PC-3 (cell line): ENCODE measurements at regions of chrX and their contacts with region 1.

Region 1: DNA sequence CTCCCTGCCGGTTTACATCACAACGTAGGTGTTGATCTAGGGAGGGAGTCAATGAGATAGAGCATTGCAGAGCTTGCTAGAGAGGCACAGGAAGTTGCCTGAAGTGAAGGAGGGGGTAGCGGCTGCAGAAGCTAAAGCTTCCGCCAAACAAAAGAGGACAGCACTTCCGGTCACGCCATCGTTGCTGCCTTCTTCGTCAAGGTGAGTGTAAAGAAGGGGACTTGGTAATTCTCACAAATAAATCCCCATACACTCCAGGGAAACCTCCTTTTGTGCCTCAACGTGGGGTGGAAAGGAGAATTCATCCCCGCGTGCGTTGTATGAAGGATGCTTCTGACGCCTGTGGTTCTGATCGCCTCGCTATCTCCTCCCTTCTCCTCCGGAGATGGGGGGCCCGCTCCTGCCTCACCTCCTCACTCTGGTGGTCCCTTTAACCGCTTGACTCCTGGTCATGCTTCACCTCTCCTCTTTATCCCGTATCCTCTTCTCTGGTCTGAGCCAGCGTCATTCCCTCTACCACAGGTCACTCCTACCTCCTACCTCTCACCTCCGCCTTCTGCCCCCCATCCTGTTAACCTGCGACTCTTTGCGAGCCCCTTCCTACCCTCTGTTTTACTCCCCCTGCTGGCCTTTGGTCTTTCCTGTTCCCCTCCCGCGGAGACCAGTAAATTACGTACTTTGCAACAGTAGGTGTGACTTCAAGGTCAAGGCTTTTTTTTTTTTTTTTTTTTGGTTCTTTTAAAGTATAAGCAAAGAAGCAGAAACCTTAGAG is 59.9 kb downstream of the GSPT2 start:
- DNase-seq: peak; percentile 62
- ATAC-seq: peak; percentile 97
- H3K4me3 ChIP-seq: peak overlapping the region; percentile 94
- H3K27ac ChIP-seq: peak overlapping the region; percentile 38; the same call in 1 of the 2 replicates
- H3K4me1 ChIP-seq: peaks cover 7% of the 10 kb centered on the region; the same call in 1 of the 2 replicates
- H3K27me3 ChIP-seq: no peaks in the 10 kb centered on the region
- CTCF ChIP-seq: peak; percentile 37; the same call in 1 of the 2 replicates

Region 2: DNA sequence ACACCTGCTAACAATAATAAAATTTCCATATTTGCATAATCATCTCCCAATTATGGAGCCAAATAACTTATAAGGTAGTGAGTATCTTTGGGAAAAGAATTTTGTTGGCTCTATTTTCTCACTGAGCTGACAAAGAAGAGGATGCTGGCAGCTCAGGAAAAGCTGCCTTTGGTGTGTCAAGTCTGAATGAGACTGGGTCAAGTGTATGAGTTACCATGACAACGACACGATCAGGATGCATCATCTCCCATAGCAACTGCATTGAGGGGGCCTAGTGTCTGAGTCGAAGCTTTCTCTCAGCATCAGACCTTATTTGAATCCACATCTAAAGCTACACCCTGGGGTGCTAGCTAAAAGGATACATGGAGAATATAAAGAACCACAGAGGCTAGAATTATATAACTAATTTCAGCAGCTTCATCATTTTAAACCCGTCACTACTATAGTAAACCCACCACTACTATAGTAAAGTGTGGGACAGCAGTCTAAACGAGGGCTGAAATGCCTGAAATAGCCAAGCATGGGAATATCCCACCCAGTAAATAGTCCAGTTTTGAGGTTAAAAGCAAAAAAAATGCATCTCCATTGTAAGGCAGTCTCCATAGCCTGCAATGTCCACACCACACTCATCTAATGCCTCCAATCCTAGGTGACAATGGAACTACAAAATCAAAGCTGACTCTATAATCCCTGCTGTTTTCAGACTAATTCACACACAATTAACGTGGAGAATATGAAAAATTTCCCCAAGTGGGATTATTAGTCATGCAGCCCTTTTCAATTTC is 43.9 kb before region 1 on chrX:
- CTCF ChIA-PET with region 1: no interaction called
- POLR2A ChIA-PET with region 1: no interaction called
- intact Hi-C with region 1: loop called (anchors 5 kb)
- DNase-seq: no peak
- ATAC-seq: no peak
- H3K4me3 ChIP-seq: no peak overlapping the region
- H3K27ac ChIP-seq: no peak overlapping the region
- H3K4me1 ChIP-seq: no peaks in the 10 kb centered on the region
- H3K27me3 ChIP-seq: peaks cover 24% of the 10 kb centered on the region; the same call in 1 of the 2 replicates
- CTCF ChIP-seq: no peak